ENCODE measurements at regions of chr2 and their contacts with region 1.

Region 1: DNA sequence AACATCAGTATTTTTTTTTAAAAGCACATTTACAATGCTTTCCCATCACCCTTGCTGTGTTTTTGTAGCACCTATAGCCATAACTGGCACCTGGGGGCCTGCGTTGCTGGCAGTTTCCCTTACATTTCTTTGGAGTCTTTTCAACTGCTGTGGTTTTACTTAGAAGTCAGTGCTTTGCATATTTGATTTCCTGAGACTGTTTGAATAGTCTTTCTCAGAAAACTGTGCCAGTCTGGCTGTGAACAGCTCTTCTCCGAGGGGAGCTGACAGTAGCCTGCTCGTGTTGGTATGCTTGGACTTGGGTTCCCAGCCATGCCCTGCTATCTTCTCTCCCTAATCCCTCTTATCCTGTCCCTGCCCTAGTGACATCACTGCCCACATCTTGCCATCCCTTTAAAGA is 81.5 kb downstream of the DPP4 start:
- DNase-seq: peak; percentile 85
- ATAC-seq: peak; percentile 84
- H3K4me3 Mint-ChIP-seq: peak overlapping the region; percentile 77
- H3K27ac Mint-ChIP-seq: peak overlapping the region; percentile 97
- H3K4me1 Mint-ChIP-seq: peaks cover 65% of the 10 kb centered on the region
- H3K27me3 Mint-ChIP-seq: no peaks in the 10 kb centered on the region
- CTCF ChIP-seq: no peak

Region 2: DNA sequence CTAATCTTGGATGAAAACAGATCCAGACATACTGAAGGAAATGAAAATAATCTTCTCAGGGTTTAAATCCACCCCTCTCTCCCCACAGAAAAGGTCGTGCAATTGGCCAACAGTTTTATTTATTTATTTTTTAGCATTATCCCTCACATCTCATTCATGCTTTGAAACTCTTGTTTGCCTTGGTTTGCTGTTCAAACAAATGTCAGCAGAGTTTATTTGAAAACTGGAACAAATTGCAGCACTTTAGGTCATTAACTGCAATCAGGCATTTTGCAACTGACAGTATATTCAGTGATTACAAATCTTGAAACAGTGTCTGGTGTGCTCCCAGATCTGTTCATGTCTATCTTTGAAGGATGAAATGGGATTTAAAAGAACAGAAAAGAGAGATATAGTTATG is 147.7 kb before region 1 on chr2:
- CTCF ChIA-PET with region 1: no interaction called
- POLR2A ChIA-PET with region 1: no interaction called
- intact Hi-C with region 1: no loop called
- DNase-seq: no peak
- ATAC-seq: no peak
- H3K4me3 Mint-ChIP-seq: no peak overlapping the region
- H3K27ac Mint-ChIP-seq: no peak overlapping the region
- H3K4me1 Mint-ChIP-seq: no peaks in the 10 kb centered on the region
- H3K27me3 Mint-ChIP-seq: peaks cover 4% of the 10 kb centered on the region
- CTCF ChIP-seq: no peak

Region 3: GRCh38 chr2:161954103-161954502 is 38.4 kb before region 1 on chr2:
- CTCF ChIA-PET with region 1: interaction called, 6 read pairs
- POLR2A ChIA-PET with region 1: interaction called, 39 read pairs
- intact Hi-C with region 1: loop called (anchors 1 kb)
- DNase-seq: peak; percentile 35
- ATAC-seq: peak; percentile 25
- H3K4me3 Mint-ChIP-seq: peak overlapping the region; percentile 1
- H3K27ac Mint-ChIP-seq: peak overlapping the region; percentile 88
- H3K4me1 Mint-ChIP-seq: peaks cover 64% of the 10 kb centered on the region
- H3K27me3 Mint-ChIP-seq: no peaks in the 10 kb centered on the region
- CTCF ChIP-seq: no peak

Region 4: GRCh38 chr2:161979490-161979889 is 13.0 kb before region 1 on chr2:
- CTCF ChIA-PET with region 1: interaction called, 3 read pairs
- POLR2A ChIA-PET with region 1: interaction called, 14 read pairs
- intact Hi-C with region 1: no loop called
- DNase-seq: no peak
- ATAC-seq: peak; percentile 41
- H3K4me3 Mint-ChIP-seq: no peak overlapping the region
- H3K27ac Mint-ChIP-seq: peak overlapping the region; percentile 64
- H3K4me1 Mint-ChIP-seq: peaks cover 59% of the 10 kb centered on the region
- H3K27me3 Mint-ChIP-seq: no peaks in the 10 kb centered on the region
- CTCF ChIP-seq: no peak

Region 5: GRCh38 chr2:162013514-162014475 is 21.3 kb after region 1 on chr2:
- CTCF ChIA-PET with region 1: interaction called, 17 read pairs
- POLR2A ChIA-PET with region 1: interaction called, 5 read pairs
- intact Hi-C with region 1: no loop called
- DNase-seq: no peak
- ATAC-seq: peak; percentile 45
- H3K4me3 Mint-ChIP-seq: peak overlapping the region; percentile 53
- H3K27ac Mint-ChIP-seq: peak overlapping the region; percentile 89
- H3K4me1 Mint-ChIP-seq: peaks cover 67% of the 10 kb centered on the region
- H3K27me3 Mint-ChIP-seq: no peaks in the 10 kb centered on the region
- CTCF ChIP-seq: no peak

Region 6: DNA sequence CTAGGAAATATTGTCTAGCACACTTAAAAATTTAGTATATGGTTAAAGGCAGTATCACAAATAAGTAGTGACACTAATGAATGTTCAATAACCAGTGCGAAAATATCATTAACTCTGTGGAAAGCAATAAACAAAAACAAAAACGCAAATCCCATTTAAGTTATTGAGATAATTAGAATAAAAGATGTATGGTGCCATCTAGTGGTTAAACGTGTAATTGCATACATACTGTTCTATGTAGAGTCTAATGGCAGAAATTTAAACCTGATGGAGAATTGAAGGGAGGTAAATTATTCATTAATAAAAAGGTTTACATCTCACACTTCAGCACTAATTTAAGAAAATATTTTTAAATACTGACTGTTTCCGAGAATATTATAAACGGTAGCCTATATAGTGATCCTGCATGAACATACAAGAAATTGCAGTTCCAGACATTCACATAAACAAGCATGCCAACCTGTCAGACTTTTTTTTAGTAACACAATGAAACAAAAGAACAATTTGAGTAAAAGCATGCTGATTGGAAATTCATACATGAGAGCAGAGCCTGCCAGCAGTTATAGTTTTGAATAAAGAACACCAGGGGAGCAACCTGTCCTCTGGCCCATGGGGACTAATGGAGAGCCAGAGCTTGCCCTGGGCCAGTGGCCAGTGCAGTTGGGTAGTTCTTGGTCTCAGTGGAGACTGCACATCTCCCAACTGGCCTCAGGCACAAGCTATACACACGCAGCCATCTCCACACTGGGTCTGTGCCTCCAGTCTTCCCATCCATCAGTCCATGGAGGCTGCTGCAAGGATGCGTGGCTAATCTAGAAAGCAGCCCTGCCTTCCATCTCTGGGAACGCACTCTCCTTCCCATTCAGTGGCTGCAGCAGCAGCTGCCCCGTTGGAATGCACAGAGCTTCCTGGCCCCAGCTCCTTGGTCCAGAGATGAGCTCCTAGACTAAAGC is 131.6 kb after region 1 on chr2:
- CTCF ChIA-PET with region 1: interaction called, 17 read pairs
- POLR2A ChIA-PET with region 1: no interaction called
- intact Hi-C with region 1: loop called (anchors 5 kb)
- DNase-seq: no peak
- ATAC-seq: peak; percentile 65
- H3K4me3 Mint-ChIP-seq: no peak overlapping the region
- H3K27ac Mint-ChIP-seq: no peak overlapping the region
- H3K4me1 Mint-ChIP-seq: peaks cover 6% of the 10 kb centered on the region
- H3K27me3 Mint-ChIP-seq: no peaks in the 10 kb centered on the region
- CTCF ChIP-seq: peak; percentile 81